ENCODE measurements at regions of chr2 and their contacts with region 1.

Region 1: GRCh38 chr2:176669398-176670174 is 400.3 kb downstream of the MTX2 start:
- DNase-seq: peak; percentile 32
- H3K4me3 ChIP-seq: no peak overlapping the region
- H3K27ac ChIP-seq: peak overlapping the region; percentile 28
- H3K4me1 ChIP-seq: peaks cover 17% of the 10 kb centered on the region
- H3K27me3 ChIP-seq: no peaks in the 10 kb centered on the region

Region 2: GRCh38 chr2:176534798-176535466 is 134.7 kb before region 1 on chr2:
- in situ Hi-C with region 1: no loop called
- DNase-seq: peak; percentile 96
- H3K4me3 ChIP-seq: peak overlapping the region; percentile 60
- H3K27ac ChIP-seq: peak overlapping the region; percentile 90
- H3K4me1 ChIP-seq: peaks cover 35% of the 10 kb centered on the region
- H3K27me3 ChIP-seq: no peaks in the 10 kb centered on the region

Region 3: GRCh38 chr2:177148477-177149154 is 479.0 kb after region 1 on chr2:
- in situ Hi-C with region 1: loop called (anchors 10 kb)
- DNase-seq: peak; percentile 88
- H3K4me3 ChIP-seq: peak overlapping the region; percentile 87
- H3K27ac ChIP-seq: no peak overlapping the region
- H3K4me1 ChIP-seq: peaks cover 4% of the 10 kb centered on the region; the same call in 1 of the 2 replicates
- H3K27me3 ChIP-seq: no peaks in the 10 kb centered on the region

Measured in GM23248 (cell line).